ENCODE measurements at regions of chr1 and their contacts with region 1.

Region 1: GRCh38 chr1:181033799-181034451 is at the start of gene MR1:
- DNase-seq: no peak
- H3K4me3 ChIP-seq: peak within 1 kb of the TSS; percentile 49 to 54
- H3K27ac ChIP-seq: peak within 1 kb of the TSS; percentile 93 to 99
- H3K4me1 ChIP-seq: peaks cover 0 to 42% (median 28%) of the 10 kb centered on the region in 4 donors
- H3K27me3 ChIP-seq: no peaks in the 10 kb centered on the region
- CTCF ChIP-seq: no peak

Region 2: DNA sequence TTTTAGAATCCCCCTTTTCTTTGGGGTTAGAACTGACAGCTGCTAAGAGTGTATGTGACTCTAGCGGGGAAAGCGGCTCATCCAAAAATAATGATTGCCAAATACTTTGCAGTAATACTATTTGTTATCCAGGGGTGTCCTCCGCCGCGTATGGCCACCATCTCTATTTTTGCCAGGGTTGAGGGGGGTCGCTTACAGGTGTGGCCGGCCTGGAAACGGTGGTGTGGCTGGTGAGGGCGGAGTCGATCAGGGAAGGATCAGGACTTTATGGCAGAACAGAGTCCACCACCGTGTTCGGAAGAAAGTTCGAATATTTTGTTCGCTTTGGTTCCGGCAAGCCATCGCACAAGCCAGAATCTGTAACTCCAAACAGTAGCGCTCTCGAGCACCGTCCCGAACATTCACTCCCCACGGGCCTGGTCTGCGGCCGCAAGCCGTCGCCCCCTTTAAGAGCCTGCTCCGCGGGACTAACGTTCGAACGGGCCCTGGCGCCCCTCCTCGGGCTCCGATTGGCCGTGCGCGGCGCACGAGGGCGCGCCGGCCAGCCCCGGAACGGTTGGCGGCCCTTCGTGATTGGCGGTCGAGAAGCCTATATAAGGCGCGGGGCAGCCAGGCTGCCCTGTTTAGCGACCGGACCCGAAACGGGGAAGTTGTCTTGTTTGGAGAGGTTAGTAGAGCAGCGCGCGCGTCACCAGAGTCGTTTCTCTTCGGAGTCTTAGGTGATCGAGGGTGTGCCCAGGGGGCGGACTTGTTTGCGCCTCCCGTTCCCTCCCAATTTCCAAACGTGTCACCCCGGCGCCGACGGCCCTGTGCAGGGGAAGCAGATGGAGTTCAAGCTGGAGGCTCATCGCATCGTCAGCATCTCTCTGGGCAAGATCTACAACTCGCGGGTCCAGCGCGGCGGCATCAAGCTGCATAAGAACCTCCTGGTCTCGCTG is 54.4 kb after region 1 on chr1 and contains the start of gene IER5:
- intact Hi-C with region 1: loop called (anchors 5 kb)
- DNase-seq: peak; percentile 97 to 98
- H3K4me3 ChIP-seq: peak within 1 kb of the TSS; percentile 89 to 90
- H3K27ac ChIP-seq: peak within 1 kb of the TSS; percentile 88 to 93
- H3K4me1 ChIP-seq: peaks cover 0 to 40% (median 15%) of the 10 kb centered on the region in 4 donors
- H3K27me3 ChIP-seq: no peaks in the 10 kb centered on the region
- CTCF ChIP-seq: peak in 1 of 2 experiments; percentile 16

Region 3: GRCh38 chr1:181142096-181142958 is 108.4 kb after region 1 on chr1:
- intact Hi-C with region 1: loop called (anchors 5 kb)
- DNase-seq: peak; percentile 78 to 89
- H3K4me3 ChIP-seq: peak overlapping the region; percentile 17 to 40
- H3K27ac ChIP-seq: peak overlapping the region; percentile 48 to 49
- H3K4me1 ChIP-seq: peaks cover 0 to 32% (median 20%) of the 10 kb centered on the region in 4 donors
- H3K27me3 ChIP-seq: no peaks in the 10 kb centered on the region
- CTCF ChIP-seq: peak; percentile 94 to 98